ENCODE measurements at regions of chr6 and their contacts with region 1.

Region 1: GRCh38 chr6:89080542-89081422 is at the start of gene PNRC1:
- DNase-seq: peak; percentile 100

Region 2: GRCh38 chr6:88963139-88964090 is 117.4 kb before region 1 on chr6 and contains the start of gene RNGTT:
- intact Hi-C with region 1: loop called (anchors 5 kb)
- DNase-seq: peak; percentile 97 to 99 (median 98)